ENCODE measurements at regions of chr5 and their contacts with region 1.

Region 1: GRCh38 chr5:140806834-140807775 is at the start of gene PCDHA4:
- DNase-seq: no peak
- H3K4me3 ChIP-seq: peak within 1 kb of the TSS; percentile 38 to 52
- H3K27ac ChIP-seq: peak within 1 kb of the TSS in 1 of 2 donors; percentile 59
- H3K4me1 ChIP-seq: no peaks in the 10 kb centered on the region
- H3K27me3 ChIP-seq: no peaks in the 10 kb centered on the region
- CTCF ChIP-seq: peak; percentile 22

Region 2: GRCh38 chr5:140741967-140742366 is 65.1 kb before region 1 on chr5:
- intact Hi-C with region 1: no loop called
- DNase-seq: no peak
- H3K4me3 ChIP-seq: no peak overlapping the region
- H3K27ac ChIP-seq: no peak overlapping the region
- H3K4me1 ChIP-seq: no peaks in the 10 kb centered on the region
- H3K27me3 ChIP-seq: peaks cover 0 to 5% of the 10 kb centered on the region in 2 donors
- CTCF ChIP-seq: no peak

Region 3: DNA sequence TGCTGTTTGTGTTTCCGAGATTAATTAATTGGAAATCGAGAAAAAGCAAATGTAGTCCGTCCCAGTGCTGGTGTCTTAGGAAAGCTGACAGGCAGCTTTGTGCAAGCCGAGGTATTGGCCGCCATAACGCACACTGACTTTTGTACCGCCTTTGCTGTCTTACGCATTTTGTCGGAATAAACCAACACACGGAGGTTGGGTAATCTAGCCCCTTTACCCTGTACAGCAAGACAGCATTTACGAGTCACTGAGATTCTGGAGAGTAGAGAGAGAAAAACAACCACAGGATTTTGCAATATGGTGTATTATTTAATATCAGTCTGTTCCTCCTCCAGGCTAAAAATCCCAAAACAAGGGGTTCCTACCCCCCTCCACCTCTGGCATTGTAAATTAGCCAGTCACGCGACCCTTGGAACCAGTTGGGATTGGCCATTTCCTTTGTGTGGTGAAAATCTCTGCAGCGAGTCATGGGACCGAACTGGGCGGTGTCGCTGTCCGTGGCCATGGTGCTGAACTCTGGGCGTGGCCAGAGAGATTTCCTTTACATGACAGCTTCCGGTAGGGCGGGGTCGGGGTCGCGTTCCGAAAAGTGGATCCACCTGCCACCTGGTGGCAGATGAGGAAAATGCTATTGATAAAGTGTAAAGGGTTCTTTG is 233.8 kb after region 1 on chr5:
- intact Hi-C with region 1: loop called (anchors 10 kb)
- DNase-seq: peak; percentile 87 to 91
- H3K4me3 ChIP-seq: peak overlapping the region; percentile 17 to 27
- H3K27ac ChIP-seq: no peak overlapping the region
- H3K4me1 ChIP-seq: peaks cover 0 to 16% (median 7%) of the 10 kb centered on the region in 4 donors
- H3K27me3 ChIP-seq: no peaks in the 10 kb centered on the region
- CTCF ChIP-seq: peak; percentile 61 to 77

Measured in tibial artery (tissue), 4 donors.